ENCODE measurements at regions of chr19 and their contacts with region 1.

Region 1: DNA sequence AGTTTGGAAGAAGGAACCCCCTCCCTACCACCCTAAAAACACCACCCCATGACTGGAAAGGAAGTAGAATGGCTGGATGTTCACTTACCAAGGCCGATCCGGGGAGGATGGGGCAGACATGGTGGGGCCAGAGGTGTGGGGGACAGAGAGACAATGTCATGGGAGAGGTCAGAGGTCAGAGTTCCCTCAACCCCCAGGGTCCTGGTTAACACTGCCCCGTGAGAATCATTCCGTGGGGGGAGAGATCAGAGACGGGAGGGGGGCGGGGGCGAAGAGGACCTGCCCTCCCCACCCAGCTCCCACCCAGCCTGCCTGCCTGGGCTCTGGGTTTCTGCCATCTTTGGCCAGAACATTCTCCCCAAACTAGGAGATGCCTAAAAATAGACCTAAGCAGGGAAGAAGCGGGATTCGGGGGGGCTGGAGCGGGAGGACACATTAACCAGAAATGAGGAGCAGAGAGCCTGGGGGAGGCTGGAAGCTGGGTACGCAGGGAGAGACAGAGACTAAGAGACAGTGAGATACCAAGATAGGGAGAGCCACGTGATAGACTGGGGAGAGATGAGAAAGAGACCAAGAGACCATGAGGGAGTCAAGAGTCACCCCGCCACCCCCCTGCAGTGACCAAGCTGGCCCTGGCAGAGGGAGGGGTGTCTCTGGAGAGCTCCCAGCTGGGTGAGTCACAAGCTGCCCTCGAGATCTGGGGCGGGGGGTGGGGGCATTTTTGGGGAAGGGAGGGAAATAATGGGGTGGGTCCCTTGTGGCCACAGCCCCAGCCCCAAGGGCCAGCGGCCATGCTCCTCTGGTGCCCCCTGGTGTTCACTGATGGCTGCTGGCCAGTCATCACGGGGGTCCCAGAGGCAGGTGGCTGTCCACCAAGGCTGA is 6.1 kb upstream of the KANK2 start:
- DNase-seq: peak; percentile 81
- CTCF ChIP-seq: peak; percentile 84

Region 2: DNA sequence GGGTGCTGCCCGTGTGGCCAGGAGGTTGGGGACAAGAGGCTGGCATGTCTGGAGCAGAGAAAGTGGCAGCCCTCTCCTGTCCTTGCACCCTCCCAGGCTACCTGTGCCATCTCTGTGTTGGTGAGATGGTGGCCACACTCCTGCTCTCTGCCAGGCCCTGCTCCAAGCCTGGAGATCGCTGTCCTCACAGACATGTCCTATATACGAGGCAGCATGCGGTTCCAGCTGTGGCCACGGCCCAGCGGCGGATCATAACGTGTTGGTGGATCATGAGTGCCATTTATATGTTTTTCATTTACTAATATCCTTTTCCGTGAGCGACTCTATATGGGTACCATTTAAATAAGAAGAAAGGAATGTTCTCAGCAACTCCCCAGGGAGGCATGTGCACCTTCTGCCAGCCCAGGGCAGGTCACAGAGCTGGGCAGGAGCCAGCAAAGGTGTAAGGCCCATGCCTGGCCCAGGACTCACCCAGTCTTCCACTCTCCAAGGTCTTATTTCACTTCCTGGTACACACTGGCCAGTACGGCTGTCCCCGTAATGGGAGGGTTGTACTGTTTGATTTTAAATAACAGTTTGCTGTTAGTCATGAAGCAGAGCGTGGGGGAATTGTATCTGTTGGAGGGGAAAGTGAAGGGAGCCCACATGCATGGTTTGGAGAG is 161.3 kb before region 1 on chr19:
- in situ Hi-C with region 1: loop called (anchors 10 kb)
- DNase-seq: no peak
- CTCF ChIP-seq: no peak

Region 3: DNA sequence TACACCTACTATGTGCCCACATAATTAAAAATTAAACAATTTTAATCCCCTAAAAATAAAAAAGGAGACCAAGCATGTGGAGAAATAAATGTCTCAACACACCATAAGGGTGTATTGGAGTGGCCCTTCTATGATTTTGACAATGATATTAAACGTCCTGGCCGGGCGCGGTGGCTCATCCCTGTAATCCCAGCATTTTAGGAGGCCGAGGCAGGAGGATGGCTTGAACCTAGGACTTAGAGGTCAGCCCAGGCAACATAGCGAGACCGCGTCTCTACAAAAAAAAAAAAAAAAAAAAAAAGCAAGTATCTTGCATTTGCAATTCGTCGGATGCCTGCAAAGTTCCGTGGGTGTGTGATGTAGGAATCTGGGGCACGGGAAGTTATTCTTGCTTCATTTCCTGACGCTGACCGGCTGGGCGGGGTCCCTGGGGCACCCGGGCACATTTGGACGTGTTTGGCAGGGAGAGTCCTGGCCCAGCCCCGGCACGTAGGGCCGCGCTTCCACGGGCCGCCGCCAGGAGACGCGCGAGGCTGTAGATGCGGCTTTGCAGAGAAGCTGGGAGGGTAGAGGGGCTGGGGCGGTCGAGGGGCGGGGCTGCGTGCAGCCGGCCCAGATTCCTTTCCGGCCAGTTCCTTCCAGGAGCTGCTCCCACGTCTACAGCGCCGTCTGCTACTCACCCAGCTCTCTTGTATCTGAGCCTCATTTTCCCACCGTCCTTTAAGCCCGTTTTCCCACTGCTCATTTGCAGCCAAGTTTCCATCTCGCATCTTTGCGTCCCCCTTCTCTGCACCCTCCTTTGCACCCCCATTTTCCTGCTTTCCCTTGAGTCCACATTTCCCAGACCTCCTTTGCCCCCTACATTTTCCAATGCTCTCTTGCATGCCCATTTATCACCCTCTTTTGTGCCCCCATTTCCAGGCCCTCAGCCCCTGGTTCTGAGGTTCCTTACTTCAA is 90.3 kb after region 1 on chr19:
- in situ Hi-C with region 1: no loop called
- DNase-seq: peak; percentile 93
- CTCF ChIP-seq: peak; percentile 99

Region 4: DNA sequence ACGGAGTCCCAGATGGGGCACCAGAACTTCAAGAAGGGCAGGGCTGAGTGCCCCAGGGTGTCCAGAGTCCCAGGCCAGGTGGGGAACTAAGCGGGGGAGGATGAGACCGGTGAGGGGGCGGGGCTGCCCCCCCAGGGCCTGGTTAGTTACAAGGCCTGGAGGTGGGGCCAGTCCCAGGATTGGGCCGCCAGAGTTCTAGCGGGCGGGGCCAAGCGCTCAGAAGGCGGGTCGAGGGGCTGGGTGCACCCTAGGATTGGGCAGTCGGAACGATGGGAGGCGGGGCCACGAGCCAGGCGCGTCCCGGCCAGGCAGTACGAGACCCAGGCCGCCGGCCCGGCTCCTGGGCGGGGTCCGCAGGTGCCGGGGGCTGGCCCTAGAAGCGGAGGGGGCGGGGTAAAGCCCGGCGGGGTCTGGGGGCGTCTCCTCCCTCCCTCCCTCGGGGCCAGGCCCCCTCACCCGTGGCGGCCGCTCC is 301.6 kb after region 1 on chr19:
- in situ Hi-C with region 1: no loop called
- DNase-seq: peak; percentile 99
- CTCF ChIP-seq: no peak